Heart left ventricle (tissue), 16 donors: ENCODE measurements at regions of chr5 and their contacts with region 1.

Region 1: GRCh38 chr5:154791535-154791934 is 36.4 kb downstream of the LARP1 start:
- DNase-seq: no peak
- ATAC-seq: no peak
- H3K4me3 ChIP-seq: no peak overlapping the region
- H3K27ac ChIP-seq: no peak overlapping the region
- H3K4me1 ChIP-seq: peaks cover 5 to 65% (median 39%) of the 10 kb centered on the region in 12 donors
- H3K27me3 ChIP-seq: no peaks in the 10 kb centered on the region
- CTCF ChIP-seq: no peak
- POLR2A ChIP-seq: no peak

Region 2: DNA sequence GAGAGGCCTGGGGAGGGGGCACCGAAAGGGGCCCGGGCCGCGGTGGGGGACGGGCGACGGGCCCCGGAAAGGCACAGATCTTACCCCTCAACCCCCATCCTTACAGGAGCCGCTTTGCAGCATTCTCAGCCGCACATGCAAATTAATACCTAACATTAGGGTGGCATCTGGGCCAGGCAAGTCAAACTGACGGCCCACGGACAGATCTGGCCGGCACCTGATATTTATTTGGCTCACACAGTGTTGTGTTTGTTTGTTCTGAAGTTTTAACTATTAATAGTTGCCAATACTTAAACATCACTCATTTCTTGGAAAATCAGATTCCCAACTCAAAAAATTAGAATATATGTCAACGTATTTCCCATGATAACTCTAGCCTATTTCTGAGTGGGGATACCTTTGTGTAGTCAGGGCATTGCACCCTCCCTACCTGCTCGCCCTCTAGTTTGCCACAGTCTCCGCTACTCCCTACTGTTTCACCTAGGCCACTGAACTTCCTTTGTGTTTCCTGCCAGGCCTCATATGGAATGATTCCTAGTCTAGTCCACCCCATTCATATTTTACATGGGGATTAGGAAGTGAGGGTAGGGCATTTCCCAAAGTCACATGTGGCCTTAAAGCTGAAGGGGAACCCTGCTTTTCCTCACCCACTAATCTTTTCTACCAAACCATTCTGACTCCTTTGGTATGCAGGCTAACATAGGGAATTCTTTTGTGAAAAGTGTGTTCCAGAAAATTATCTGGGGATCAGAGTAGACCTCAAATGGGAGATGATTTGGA is 108.2 kb before region 1 on chr5:
- intact Hi-C with region 1: loop called in 1 of 10 experiments (anchors 5 kb)
- DNase-seq: no peak
- ATAC-seq: no peak
- H3K4me3 ChIP-seq: peak overlapping the region; percentile 23 to 69 (median 54)
- H3K27ac ChIP-seq: peak overlapping the region; percentile 59 to 88 (median 84)
- H3K4me1 ChIP-seq: peaks cover 0 to 25% (median 7%) of the 10 kb centered on the region in 12 donors
- H3K27me3 ChIP-seq: no peaks in the 10 kb centered on the region
- CTCF ChIP-seq: no peak
- POLR2A ChIP-seq: no peak

Region 3: DNA sequence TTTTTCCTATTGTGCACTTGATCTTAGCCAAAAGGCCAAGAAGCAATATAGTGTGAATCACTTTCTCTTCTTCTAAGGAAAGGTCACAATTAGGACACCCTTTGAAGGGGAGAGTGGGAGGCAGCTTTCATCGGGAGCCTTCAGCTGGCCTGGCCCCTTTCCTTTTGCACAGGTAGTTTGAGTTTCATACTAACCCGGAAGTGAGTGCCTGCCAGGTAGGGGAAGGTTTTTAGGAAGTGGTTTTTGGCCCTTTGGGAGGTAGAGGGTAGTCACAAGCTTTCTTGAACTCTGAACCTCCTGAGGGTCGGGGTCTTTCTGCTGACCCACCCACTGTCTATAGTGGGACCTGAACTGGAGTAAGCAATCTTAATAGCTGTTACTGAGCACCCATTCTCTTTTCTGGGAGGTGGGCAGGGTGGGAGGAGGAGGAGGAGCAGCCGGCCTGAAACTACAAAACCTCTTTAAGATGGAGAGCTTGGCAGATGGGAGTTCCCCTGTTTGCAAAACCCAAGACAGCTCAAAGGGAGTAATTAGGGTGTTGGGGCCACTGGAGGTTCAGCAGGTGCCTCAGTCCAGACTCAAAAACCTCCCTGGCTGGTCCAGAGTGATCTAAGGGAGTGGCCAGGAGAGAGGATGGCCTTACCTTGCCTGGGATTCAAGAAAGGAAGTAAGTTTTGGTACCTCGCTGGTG is 30.3 kb before region 1 on chr5:
- intact Hi-C with region 1: loop called in 5 of 10 experiments (anchors 1 to 5 kb)
- DNase-seq: no peak
- ATAC-seq: no peak
- H3K4me3 ChIP-seq: no peak overlapping the region
- H3K27ac ChIP-seq: peak overlapping the region in 6 of 12 donors; percentile 2 to 42 (median 24)
- H3K4me1 ChIP-seq: peaks cover 0 to 81% (median 59%) of the 10 kb centered on the region in 12 donors
- H3K27me3 ChIP-seq: no peaks in the 10 kb centered on the region
- CTCF ChIP-seq: no peak
- POLR2A ChIP-seq: no peak